ENCODE measurements at regions of chrX and their contacts with region 1.

Region 1: DNA sequence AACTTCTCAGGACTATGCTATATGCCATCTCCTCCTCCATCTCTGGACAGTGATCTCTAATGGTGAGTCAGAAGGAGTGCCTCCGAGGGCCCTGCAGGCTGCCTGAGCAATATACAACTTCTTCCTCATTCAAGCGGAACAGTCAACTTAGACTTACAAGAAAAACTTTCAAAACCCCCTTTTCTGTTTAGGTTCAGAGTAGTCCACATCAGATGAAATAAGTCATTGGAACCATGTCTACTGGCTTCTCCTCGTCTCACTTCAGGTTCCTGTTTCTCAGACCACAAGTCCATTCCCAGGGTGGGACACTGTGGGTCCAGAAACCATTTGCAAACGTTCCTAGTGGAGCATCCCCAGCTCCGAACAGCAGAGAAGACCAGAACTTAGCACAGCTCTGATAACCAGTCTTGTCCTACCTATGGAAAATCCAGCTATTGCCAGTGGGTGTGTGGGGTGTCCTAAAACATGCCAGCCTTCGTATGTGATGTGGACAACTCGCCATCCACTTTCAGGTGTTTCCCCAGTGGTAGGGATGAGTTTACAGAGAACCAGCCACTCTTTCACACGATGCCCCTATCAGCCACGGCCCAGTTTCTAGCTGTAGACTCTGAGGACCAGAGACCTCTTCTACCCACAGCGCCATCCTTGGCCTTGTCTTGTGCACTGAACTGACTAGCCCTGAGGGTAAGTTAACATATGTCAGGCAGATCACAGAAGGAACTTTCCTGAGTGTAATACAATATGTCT is 32.7 kb upstream of the NKRF start:
- DNase-seq: peak; percentile 67
- ATAC-seq: peak; percentile 73
- H3K4me3 ChIP-seq: peak overlapping the region in 1 of 5 experiments; percentile 19
- H3K4me3 Mint-ChIP-seq: peak overlapping the region; percentile 64
- H3K27ac ChIP-seq: peak overlapping the region; percentile 65 to 80
- H3K27ac Mint-ChIP-seq: peak overlapping the region; percentile 91
- H3K4me1 ChIP-seq: peaks cover 48 to 53% of the 10 kb centered on the region in 2 donors
- H3K4me1 Mint-ChIP-seq: peaks cover 62% of the 10 kb centered on the region
- H3K27me3 ChIP-seq: no peaks in the 10 kb centered on the region
- H3K27me3 Mint-ChIP-seq: no peaks in the 10 kb centered on the region
- CTCF ChIP-seq: no peak

Region 2: DNA sequence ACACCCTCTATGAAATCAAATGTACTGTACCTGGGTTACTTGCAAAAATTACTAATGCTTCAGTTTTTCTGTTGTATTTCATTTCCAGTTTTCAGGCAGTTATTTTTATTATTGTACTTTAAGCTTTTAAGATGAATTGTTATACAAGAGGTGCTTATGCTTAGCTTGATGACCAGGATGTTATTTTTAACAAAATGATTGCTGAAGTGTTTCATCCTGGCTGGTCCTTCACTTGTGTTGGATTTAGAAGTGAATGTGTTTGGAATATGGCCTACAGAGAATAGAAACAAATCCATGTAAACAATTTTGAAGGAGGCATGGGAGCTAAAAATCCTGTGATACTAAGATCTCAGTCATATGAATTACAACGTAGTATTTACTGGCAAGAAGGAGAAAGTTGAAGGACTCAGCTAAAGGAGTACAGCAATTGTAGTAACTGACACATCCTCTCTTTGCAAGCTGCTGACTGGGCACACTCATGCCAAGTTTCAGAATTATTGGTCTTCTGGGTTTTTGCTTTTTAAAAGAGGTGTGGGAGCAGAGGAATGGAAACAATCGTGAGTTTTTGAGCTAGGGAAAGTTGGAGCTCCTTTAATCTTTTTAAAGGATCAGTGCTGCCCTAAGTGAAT is 55.4 kb before region 1 on chrX:
- CTCF ChIA-PET with region 1: no interaction called
- POLR2A ChIA-PET with region 1: no interaction called
- intact Hi-C with region 1: loop called (anchors 10 kb)
- DNase-seq: no peak
- ATAC-seq: no peak
- H3K4me3 ChIP-seq: no peak overlapping the region
- H3K4me3 Mint-ChIP-seq: no peak overlapping the region
- H3K27ac ChIP-seq: no peak overlapping the region
- H3K27ac Mint-ChIP-seq: no peak overlapping the region
- H3K4me1 ChIP-seq: peaks cover 14 to 22% of the 10 kb centered on the region in 2 donors
- H3K4me1 Mint-ChIP-seq: peaks cover 24% of the 10 kb centered on the region
- H3K27me3 ChIP-seq: no peaks in the 10 kb centered on the region
- H3K27me3 Mint-ChIP-seq: no peaks in the 10 kb centered on the region
- CTCF ChIP-seq: no peak

Region 3: GRCh38 chrX:119617517-119618164 is 21.3 kb before region 1 on chrX:
- CTCF ChIA-PET with region 1: interaction called, 5 read pairs
- POLR2A ChIA-PET with region 1: interaction called, 5 read pairs
- intact Hi-C with region 1: loop called (anchors 2 kb)
- DNase-seq: peak; percentile 71
- ATAC-seq: peak; percentile 48
- H3K4me3 ChIP-seq: peak overlapping the region; percentile 20 to 63 (median 35)
- H3K4me3 Mint-ChIP-seq: peak overlapping the region; percentile 83
- H3K27ac ChIP-seq: peak overlapping the region; percentile 68 to 69
- H3K27ac Mint-ChIP-seq: peak overlapping the region; percentile 90
- H3K4me1 ChIP-seq: peaks cover 58 to 69% of the 10 kb centered on the region in 2 donors
- H3K4me1 Mint-ChIP-seq: peaks cover 59% of the 10 kb centered on the region
- H3K27me3 ChIP-seq: no peaks in the 10 kb centered on the region
- H3K27me3 Mint-ChIP-seq: no peaks in the 10 kb centered on the region
- CTCF ChIP-seq: no peak

Region 4: DNA sequence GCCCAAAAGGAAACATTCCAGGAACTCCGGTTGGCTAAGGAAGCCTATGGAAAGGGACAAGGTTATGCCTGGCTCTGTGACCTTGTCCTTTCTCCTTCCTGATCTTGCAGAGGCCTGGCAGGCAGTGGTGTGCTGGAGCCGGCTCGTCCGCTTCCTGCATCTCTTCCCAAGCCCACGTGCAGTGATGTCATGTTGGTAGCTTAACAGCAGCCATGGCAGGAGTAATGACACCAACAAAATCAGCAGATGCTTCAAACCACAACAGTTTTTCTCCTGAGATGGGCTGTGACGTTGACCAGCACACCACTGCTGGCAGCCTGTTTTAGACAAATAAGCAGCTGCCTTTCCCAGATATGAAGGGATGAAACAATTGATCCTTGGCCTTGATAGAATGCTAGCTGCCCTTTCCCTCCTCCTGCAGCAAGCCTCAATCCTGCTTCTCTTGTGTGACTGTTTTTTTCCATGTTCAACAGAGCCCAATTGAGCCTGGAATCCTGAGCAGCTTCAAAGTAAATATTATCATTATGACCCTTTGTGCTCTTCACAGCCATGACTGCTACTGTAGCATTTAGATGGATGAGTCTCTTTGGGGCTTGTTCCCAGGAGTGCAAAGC is 30.6 kb after region 1 on chrX:
- CTCF ChIA-PET with region 1: no interaction called
- POLR2A ChIA-PET with region 1: no interaction called
- intact Hi-C with region 1: loop called (anchors 1 kb)
- DNase-seq: no peak
- ATAC-seq: no peak
- H3K4me3 ChIP-seq: no peak overlapping the region
- H3K4me3 Mint-ChIP-seq: no peak overlapping the region
- H3K27ac ChIP-seq: peak overlapping the region in 1 of 2 donors; percentile 10
- H3K27ac Mint-ChIP-seq: peak overlapping the region; percentile 41
- H3K4me1 ChIP-seq: peaks cover 25 to 31% of the 10 kb centered on the region in 2 donors
- H3K4me1 Mint-ChIP-seq: peaks cover 28% of the 10 kb centered on the region
- H3K27me3 ChIP-seq: no peaks in the 10 kb centered on the region
- H3K27me3 Mint-ChIP-seq: no peaks in the 10 kb centered on the region
- CTCF ChIP-seq: no peak

Region 5: DNA sequence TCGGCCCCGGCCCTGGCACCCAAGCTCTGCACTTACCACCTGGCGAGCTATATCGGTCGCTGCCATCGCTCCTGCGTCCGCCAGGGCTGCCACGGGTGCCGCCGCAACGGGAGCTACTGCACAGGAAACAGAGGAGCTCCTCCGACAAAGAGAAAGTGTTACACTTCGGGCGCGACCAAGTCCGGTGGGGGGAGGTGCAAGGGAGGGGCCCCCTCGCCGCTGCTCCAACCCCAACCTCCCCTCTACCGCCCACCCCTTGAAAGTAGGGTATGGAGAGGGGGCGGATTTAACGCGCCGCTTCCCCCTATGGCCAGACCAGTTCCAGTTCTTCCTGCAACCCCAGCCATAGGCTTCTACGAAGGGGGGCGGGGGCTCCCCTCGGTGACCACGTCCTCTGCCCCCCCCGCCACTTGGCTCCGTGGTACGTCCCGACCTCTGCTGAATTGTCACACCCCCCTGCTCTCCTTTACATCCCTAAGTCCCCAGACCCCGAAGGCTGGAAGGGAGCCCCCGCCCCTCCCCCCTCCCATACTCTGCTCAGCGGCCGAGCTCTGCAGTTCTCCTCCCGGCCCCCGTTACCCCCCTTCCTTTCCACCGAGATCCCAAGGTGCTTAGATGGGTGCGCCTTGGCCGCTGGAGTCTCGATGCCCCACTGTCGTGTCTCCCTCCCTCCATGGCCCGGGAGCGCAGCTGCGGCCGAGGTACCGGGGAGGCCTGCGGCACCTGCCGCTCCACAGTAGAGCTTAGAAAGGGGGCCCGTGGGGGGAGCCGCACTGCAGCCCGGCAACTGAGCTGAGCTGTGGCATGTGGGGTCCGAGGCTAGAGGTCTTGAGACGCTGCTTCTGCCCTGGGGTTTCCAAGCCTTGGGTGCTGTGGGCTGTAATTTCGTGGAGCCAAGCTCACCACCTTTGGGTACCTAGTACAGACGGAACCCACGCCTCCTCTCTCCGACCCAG is 54.4 kb after region 1 on chrX and contains the start of gene SEPTIN6:
- CTCF ChIA-PET with region 1: no interaction called
- POLR2A ChIA-PET with region 1: no interaction called
- intact Hi-C with region 1: loop called (anchors 1 kb)
- DNase-seq: peak; percentile 92
- ATAC-seq: peak; percentile 66
- H3K4me3 ChIP-seq: peak within 1 kb of the TSS; percentile 69 to 78 (median 71)
- H3K4me3 Mint-ChIP-seq: peak within 1 kb of the TSS; percentile 90
- H3K27ac ChIP-seq: peak within 1 kb of the TSS; percentile 71 to 99
- H3K27ac Mint-ChIP-seq: peak within 1 kb of the TSS; percentile 91
- H3K4me1 ChIP-seq: peaks cover 68 to 77% of the 10 kb centered on the region in 2 donors
- H3K4me1 Mint-ChIP-seq: peaks cover 60% of the 10 kb centered on the region
- H3K27me3 ChIP-seq: no peaks in the 10 kb centered on the region
- H3K27me3 Mint-ChIP-seq: no peaks in the 10 kb centered on the region
- CTCF ChIP-seq: peak; percentile 6
- total RNA-seq, gene SEPTIN6: 290 and 310 TPM in 2 replicates

Measured in B cell (primary cell).